HCT116 (cell line): ENCODE measurements at regions of chr2 and their contacts with region 1.

Region 1: DNA sequence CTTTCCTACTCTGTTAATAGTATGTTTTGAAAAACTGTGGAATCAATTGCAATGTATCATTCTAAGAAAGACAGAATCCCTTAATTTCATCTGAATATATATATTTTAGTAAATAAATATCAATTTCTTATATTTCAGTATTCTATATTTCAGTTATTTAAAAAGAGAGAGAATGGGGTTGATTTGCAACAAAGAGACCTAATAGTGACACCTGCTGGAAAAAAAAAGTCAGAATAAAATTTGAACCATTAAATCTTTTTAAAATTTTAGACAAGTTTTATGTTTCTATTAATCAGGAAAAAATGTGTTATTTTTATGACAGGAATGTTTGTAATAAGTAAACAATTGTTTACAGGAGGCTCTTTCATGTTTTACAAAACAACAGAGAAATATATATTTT is 20.7 kb upstream of the CCNT2 start:
- DNase-seq: peak; percentile 15
- ATAC-seq: no peak
- H3K4me3 ChIP-seq: no peak overlapping the region
- H3K27ac ChIP-seq: no peak overlapping the region
- H3K4me1 ChIP-seq: no peaks in the 10 kb centered on the region
- H3K27me3 ChIP-seq: no peaks in the 10 kb centered on the region
- CTCF ChIP-seq: peak; percentile 28 to 77 (median 43); a peak in 4 of 6 replicates
- POLR2A ChIP-seq: no peak
- RAD21 ChIP-seq: peak; percentile 71

Region 2: DNA sequence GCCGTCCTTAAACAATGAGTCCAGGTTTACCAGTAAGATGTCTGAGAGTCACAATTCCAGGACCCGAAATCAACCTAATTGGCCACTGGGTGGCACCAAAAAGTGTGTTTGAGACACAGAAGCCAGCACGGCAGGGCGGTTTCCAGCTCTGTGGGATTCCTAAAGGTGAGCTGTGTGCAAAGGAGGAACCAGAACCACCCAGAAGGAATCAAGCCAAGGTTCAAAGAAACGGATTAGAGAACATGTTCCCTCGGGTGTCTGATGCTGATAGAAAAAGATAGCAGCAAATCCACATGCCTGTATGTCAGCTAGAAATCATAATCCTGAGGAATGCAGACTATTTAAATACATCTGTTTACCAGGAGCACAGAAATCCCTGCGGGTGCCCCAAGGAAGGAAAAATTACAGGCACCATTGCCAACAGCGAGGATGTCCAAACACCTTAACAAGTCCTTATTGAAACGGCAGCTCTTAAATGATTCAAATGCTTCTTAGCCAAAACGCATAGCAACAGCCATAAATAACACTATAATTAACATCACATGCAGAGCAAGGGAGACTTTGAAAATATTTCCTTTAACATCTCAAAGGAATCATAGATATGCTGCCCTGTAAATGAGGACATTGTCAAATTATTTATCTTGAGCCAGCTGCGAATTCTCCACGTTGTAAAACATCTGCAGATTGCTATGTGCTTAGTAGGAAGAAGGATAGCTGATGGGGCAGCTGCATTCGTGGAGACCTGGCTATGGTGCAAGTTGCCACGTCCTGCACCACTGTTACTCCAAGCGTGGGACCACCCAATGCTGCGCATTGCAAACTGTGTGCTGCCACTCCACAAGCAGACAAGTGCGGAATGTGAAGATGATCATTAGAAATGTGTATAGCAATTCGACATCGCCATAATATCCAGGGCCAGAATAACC is 1010.9 kb before region 1 on chr2:
- CTCF ChIA-PET with region 1: no interaction called
- POLR2A ChIA-PET with region 1: no interaction called
- RAD21 ChIA-PET with region 1: no interaction called
- intact Hi-C with region 1: loop called (anchors 10 kb)
- DNase-seq: peak; percentile 70
- ATAC-seq: peak; percentile 94
- H3K4me3 ChIP-seq: no peak overlapping the region
- H3K27ac ChIP-seq: no peak overlapping the region
- H3K4me1 ChIP-seq: no peaks in the 10 kb centered on the region
- H3K27me3 ChIP-seq: no peaks in the 10 kb centered on the region
- CTCF ChIP-seq: peak; percentile 61 to 76 (median 71)
- POLR2A ChIP-seq: no peak
- RAD21 ChIP-seq: peak; percentile 82

Region 3: GRCh38 chr2:134118279-134119116 is 779.4 kb before region 1 on chr2:
- CTCF ChIA-PET with region 1: no interaction called
- POLR2A ChIA-PET with region 1: no interaction called
- RAD21 ChIA-PET with region 1: no interaction called
- intact Hi-C with region 1: loop called (anchors 10 kb)
- DNase-seq: peak; percentile 84
- ATAC-seq: peak; percentile 52
- H3K4me3 ChIP-seq: peak overlapping the region in 1 of 2 experiments; percentile 81; a peak in 1 of 4 replicates
- H3K27ac ChIP-seq: no peak overlapping the region
- H3K4me1 ChIP-seq: peaks cover 12 to 19% of the 10 kb centered on the region in 2 experiments; a peak in 3 of 4 replicates
- H3K27me3 ChIP-seq: no peaks in the 10 kb centered on the region
- CTCF ChIP-seq: peak; percentile 68 to 97 (median 80)
- POLR2A ChIP-seq: no peak
- RAD21 ChIP-seq: peak; percentile 98

Region 4: GRCh38 chr2:134460583-134460998 is 437.3 kb before region 1 on chr2:
- CTCF ChIA-PET with region 1: interaction called, 11 read pairs
- POLR2A ChIA-PET with region 1: no interaction called
- RAD21 ChIA-PET with region 1: interaction called in 1 of 2 experiments, 3 read pairs
- intact Hi-C with region 1: no loop called
- DNase-seq: peak; percentile 48
- ATAC-seq: peak; percentile 96
- H3K4me3 ChIP-seq: no peak overlapping the region
- H3K27ac ChIP-seq: no peak overlapping the region
- H3K4me1 ChIP-seq: no peaks in the 10 kb centered on the region
- H3K27me3 ChIP-seq: no peaks in the 10 kb centered on the region
- CTCF ChIP-seq: peak; percentile 42 to 69 (median 63); a peak in 5 of 6 replicates
- POLR2A ChIP-seq: no peak
- RAD21 ChIP-seq: peak; percentile 83

Region 5: GRCh38 chr2:134466141-134466540 is 431.8 kb before region 1 on chr2:
- CTCF ChIA-PET with region 1: interaction called, 11 read pairs
- POLR2A ChIA-PET with region 1: no interaction called
- RAD21 ChIA-PET with region 1: no interaction called
- intact Hi-C with region 1: loop called (anchors 1 kb)
- DNase-seq: peak; percentile 54
- ATAC-seq: peak; percentile 87
- H3K4me3 ChIP-seq: no peak overlapping the region
- H3K27ac ChIP-seq: no peak overlapping the region
- H3K4me1 ChIP-seq: no peaks in the 10 kb centered on the region
- H3K27me3 ChIP-seq: no peaks in the 10 kb centered on the region
- CTCF ChIP-seq: peak; percentile 67 to 72 (median 68)
- POLR2A ChIP-seq: no peak
- RAD21 ChIP-seq: peak; percentile 68

Region 6: GRCh38 chr2:134657637-134658250 is 240.2 kb before region 1 on chr2:
- CTCF ChIA-PET with region 1: interaction called, 3 read pairs
- POLR2A ChIA-PET with region 1: no interaction called
- RAD21 ChIA-PET with region 1: no interaction called
- intact Hi-C with region 1: loop called (anchors 2 kb)
- DNase-seq: peak; percentile 10
- ATAC-seq: peak; percentile 85
- H3K4me3 ChIP-seq: no peak overlapping the region
- H3K27ac ChIP-seq: no peak overlapping the region
- H3K4me1 ChIP-seq: no peaks in the 10 kb centered on the region
- H3K27me3 ChIP-seq: peaks cover 3% of the 10 kb centered on the region; the same call in 1 of the 2 replicates
- CTCF ChIP-seq: peak; percentile 49 to 75 (median 66); a peak in 5 of 6 replicates
- POLR2A ChIP-seq: no peak
- RAD21 ChIP-seq: peak; percentile 61

Region 7: GRCh38 chr2:134706587-134707329 is 191.2 kb before region 1 on chr2:
- CTCF ChIA-PET with region 1: no interaction called
- POLR2A ChIA-PET with region 1: no interaction called
- RAD21 ChIA-PET with region 1: no interaction called
- intact Hi-C with region 1: no loop called
- DNase-seq: no peak
- ATAC-seq: no peak
- H3K4me3 ChIP-seq: no peak overlapping the region
- H3K27ac ChIP-seq: no peak overlapping the region
- H3K4me1 ChIP-seq: no peaks in the 10 kb centered on the region
- H3K27me3 ChIP-seq: peaks cover 19% of the 10 kb centered on the region
- CTCF ChIP-seq: no peak
- POLR2A ChIP-seq: no peak
- RAD21 ChIP-seq: no peak

Region 8: GRCh38 chr2:134782792-134783191 is 115.1 kb before region 1 on chr2:
- CTCF ChIA-PET with region 1: interaction called, 14 read pairs
- POLR2A ChIA-PET with region 1: no interaction called
- RAD21 ChIA-PET with region 1: no interaction called
- intact Hi-C with region 1: loop called (anchors 1 kb)
- DNase-seq: peak; percentile 34
- ATAC-seq: peak; percentile 69
- H3K4me3 ChIP-seq: no peak overlapping the region
- H3K27ac ChIP-seq: no peak overlapping the region
- H3K4me1 ChIP-seq: no peaks in the 10 kb centered on the region
- H3K27me3 ChIP-seq: no peaks in the 10 kb centered on the region; the same call in 1 of the 2 replicates
- CTCF ChIP-seq: peak; percentile 41 to 66 (median 58); a peak in 5 of 6 replicates
- POLR2A ChIP-seq: no peak
- RAD21 ChIP-seq: peak; percentile 79

Region 9: GRCh38 chr2:134796373-134796772 is 101.6 kb before region 1 on chr2:
- CTCF ChIA-PET with region 1: no interaction called
- POLR2A ChIA-PET with region 1: no interaction called
- RAD21 ChIA-PET with region 1: no interaction called
- intact Hi-C with region 1: no loop called
- DNase-seq: no peak
- ATAC-seq: no peak
- H3K4me3 ChIP-seq: no peak overlapping the region
- H3K27ac ChIP-seq: no peak overlapping the region
- H3K4me1 ChIP-seq: no peaks in the 10 kb centered on the region
- H3K27me3 ChIP-seq: no peaks in the 10 kb centered on the region
- CTCF ChIP-seq: no peak
- POLR2A ChIP-seq: no peak
- RAD21 ChIP-seq: no peak